A673 (cell line): ENCODE measurements at regions of chr2 and their contacts with region 1.

Region 1: GRCh38 chr2:235070063-235070706 is 118.4 kb downstream of the SH3BP4 start:
- DNase-seq: no peak
- H3K4me3 ChIP-seq: no peak overlapping the region
- H3K27ac ChIP-seq: no peak overlapping the region
- H3K4me1 ChIP-seq: peaks cover 6% of the 10 kb centered on the region
- H3K27me3 ChIP-seq: no peaks in the 10 kb centered on the region
- CTCF ChIP-seq: no peak

Region 2: GRCh38 chr2:234650911-234651310 is 419.3 kb before region 1 on chr2:
- CTCF ChIA-PET with region 1: no interaction called
- POLR2A ChIA-PET with region 1: no interaction called
- intact Hi-C with region 1: no loop called
- DNase-seq: no peak
- H3K4me3 ChIP-seq: no peak overlapping the region
- H3K27ac ChIP-seq: no peak overlapping the region
- H3K4me1 ChIP-seq: no peaks in the 10 kb centered on the region
- H3K27me3 ChIP-seq: no peaks in the 10 kb centered on the region
- CTCF ChIP-seq: no peak

Region 3: GRCh38 chr2:234996069-234996940 is 73.9 kb before region 1 on chr2:
- CTCF ChIA-PET with region 1: no interaction called
- POLR2A ChIA-PET with region 1: no interaction called
- intact Hi-C with region 1: no loop called
- DNase-seq: peak; percentile 16
- H3K4me3 ChIP-seq: no peak overlapping the region
- H3K27ac ChIP-seq: no peak overlapping the region
- H3K4me1 ChIP-seq: peaks cover 10% of the 10 kb centered on the region
- H3K27me3 ChIP-seq: no peaks in the 10 kb centered on the region
- CTCF ChIP-seq: no peak

Region 4: DNA sequence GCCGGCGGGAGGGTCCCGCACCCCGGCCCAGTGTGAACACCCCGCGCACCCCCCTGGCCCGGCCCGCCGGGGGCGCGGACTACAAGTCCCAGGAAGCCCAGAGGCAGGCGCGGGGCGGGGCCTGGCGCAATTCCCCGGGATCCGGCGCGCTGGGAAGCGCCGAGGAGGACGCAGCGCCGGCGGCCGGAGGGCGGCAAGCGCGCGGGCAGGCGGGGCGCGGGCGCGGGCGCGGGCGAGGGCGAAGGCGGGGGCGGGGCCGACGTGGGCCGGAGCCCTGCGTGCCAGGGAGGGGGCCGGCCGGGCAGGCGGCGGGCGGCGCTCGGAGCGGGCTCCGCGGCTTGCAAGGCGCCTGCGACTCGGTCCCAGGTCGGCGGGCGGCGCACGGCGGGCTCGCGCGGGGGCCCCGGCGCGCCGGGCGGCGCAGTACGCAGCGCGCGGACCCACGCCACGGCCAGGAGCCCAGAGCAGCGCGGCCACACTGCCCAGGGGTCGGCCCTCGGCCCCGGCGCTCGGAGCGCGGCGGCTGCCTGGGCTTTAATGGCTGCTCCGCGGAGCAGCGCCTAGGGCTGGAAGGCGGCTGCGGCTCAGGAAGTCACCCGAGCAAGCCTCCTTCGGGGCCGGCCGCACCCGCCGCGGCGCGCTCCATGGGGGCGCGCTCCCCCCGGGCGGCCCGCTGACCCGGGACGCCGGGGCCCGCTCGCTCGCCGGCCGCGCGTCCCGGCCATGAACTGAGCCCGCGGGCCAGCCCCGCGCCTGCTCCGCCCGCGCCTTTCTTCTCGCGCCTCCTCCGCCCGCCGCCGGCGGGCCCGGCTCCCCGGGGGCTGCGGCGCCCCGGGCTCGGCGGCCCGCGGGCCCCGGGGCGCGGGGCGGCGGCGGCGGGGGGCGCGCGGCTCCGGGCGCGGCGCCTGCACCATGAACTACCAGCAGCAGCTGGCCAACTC is 423.9 kb after region 1 on chr2 and contains the start of gene AGAP1:
- CTCF ChIA-PET with region 1: no interaction called
- POLR2A ChIA-PET with region 1: no interaction called
- intact Hi-C with region 1: no loop called
- DNase-seq: peak; percentile 93
- H3K4me3 ChIP-seq: peak within 1 kb of the TSS; percentile 75
- H3K27ac ChIP-seq: peak within 1 kb of the TSS; percentile 73
- H3K4me1 ChIP-seq: peaks cover 15% of the 10 kb centered on the region
- H3K27me3 ChIP-seq: no peaks in the 10 kb centered on the region
- CTCF ChIP-seq: no peak
- total RNA-seq, gene AGAP1: 25.3 and 27.5 TPM in 2 replicates

Region 5: GRCh38 chr2:236769921-236770671 is 1699.9 kb after region 1 on chr2:
- CTCF ChIA-PET with region 1: no interaction called
- POLR2A ChIA-PET with region 1: interaction called, 11 read pairs
- intact Hi-C with region 1: no loop called
- DNase-seq: peak; percentile 6
- H3K4me3 ChIP-seq: no peak overlapping the region
- H3K27ac ChIP-seq: no peak overlapping the region
- H3K4me1 ChIP-seq: no peaks in the 10 kb centered on the region
- H3K27me3 ChIP-seq: no peaks in the 10 kb centered on the region
- CTCF ChIP-seq: no peak